ENCODE measurements at regions of chr1 and their contacts with region 1.

Region 1: DNA sequence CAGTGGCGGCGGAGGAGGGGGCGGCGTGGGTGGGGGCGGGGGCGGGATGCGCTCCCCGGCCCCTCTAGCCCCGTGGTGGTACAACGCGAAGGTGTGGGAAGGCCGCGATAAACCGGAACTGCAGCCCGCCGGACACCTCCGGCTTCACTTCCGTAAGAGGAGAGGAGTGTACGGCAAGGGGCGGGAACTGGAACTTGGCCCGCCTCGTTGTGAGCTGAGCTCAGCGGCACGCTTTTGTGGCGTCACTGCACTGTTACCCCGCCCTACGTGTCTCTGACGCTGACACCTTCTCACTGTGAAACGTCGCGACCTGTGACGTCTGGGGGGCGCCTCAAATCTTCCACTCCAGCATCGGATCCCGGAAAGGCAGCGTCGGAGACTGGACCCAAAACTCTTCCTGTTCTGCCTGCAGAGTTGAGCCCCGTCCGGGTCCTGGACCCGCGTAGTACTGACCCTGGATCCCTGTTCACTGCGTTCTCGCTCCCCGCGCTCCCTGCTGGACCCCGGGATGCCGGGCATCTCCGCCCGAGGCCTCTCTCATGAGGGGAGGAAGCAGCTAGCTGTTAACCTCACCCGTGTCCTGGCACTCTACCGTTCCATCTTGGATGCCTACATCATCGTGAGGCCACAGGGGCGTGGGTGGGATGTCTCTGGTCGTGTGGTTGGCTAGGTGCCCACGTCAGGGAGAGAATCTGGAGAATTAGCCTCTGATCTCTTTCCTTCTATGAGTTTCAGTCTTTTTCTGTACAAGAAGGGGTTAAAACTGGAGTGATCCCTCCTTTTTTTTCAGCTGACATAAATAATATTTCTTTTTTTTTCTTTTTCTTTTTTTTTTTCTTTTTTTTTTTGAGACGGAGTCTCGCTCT is at the start of gene ISG20L2:
- DNase-seq: peak; percentile 94
- CTCF ChIP-seq: no peak

Region 2: DNA sequence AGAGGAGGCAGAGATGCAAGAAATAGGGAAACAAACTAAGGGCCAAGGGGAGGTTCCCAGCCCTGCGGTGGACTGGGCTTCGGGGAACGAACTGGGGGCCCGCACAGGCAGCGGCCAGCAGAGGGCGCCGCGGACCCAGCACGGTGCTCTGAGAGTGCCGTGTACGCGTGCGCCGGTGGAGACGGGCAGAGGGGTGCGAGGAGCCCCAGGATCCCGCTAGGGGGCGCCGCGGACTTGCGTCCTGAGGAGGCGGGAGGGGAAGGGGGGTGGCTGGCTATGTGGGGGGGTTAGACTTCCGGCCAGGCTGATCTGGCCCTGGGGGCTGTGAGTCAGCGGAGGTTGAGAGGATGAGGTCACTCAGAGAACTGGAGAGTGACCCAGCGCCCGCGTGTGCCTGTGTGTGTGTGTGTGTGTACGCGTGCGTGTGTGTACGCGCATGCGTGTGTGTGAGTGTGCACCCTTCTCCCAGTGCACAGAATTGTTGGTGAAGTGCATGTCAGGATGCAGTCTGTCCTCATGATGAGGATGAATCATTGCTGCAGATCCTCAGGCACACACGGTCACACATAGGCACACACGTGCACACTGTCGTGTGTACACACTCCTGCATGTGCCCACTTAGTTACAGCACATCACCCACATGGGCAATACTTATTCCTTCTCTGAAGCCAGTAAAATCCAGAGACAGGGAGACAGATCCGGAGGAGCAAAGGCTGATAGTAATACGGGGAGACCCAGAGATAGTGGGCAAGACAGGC is 68.7 kb before region 1 on chr1:
- CTCF ChIA-PET with region 1: interaction called, 103 read pairs
- POLR2A ChIA-PET with region 1: interaction called, 4 read pairs
- DNase-seq: peak; percentile 99
- CTCF ChIP-seq: peak; percentile 99

Region 3: GRCh38 chr1:156740679-156741612 is 12.1 kb after region 1 on chr1 and contains the start of gene MRPL24:
- CTCF ChIA-PET with region 1: interaction called, 64 read pairs
- POLR2A ChIA-PET with region 1: interaction called, 11 read pairs
- DNase-seq: peak; percentile 93
- CTCF ChIP-seq: no peak

Region 4: GRCh38 chr1:156773607-156774006 is 44.8 kb after region 1 on chr1:
- CTCF ChIA-PET with region 1: interaction called, 94 read pairs
- POLR2A ChIA-PET with region 1: no interaction called
- DNase-seq: no peak
- CTCF ChIP-seq: no peak

Region 5: GRCh38 chr1:156813750-156814570 is 85.1 kb after region 1 on chr1:
- CTCF ChIA-PET with region 1: interaction called, 10 read pairs
- POLR2A ChIA-PET with region 1: no interaction called
- DNase-seq: peak; percentile 82
- CTCF ChIP-seq: peak; percentile 58

Region 6: DNA sequence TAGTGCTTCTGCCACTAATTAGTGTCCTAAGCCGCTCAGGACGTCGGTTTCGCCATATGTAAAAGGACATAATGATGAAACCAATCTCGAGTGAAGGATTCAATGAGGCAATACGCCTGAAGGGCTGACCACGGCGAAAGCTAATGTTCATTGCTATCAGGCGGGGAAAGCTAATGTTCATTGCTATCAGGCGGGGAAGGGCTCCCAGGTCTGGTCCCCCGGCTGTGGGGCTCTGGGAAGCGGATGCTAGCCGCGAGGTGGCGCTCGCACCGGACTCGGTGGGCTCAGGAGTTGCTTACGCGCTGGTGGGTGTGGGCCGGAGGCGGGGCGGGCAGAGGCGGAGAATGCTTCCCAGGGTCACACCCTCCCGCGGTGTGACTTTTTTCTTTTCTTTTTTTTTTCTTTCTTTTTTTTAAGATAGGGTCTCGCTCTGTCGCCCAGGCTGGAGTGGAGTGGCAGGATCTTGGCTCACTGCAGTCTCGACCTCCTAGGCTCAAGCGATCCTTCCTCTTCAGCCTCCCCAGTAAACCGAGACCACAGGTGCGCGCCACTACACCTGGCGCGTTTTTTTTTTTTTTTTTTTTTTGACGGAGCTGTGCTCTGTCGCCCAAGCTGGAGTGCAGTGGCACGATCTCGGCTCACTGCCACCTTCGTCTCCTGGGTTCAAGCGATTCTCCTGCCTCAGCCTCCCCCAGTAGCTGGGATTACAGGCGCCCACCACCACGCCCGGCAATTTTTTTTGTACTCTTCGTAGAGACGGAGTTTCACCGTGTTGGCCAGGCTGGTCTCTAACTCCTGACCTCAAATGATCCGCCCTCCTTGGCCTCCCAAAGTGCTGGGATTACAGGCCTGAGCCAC is 163.6 kb after region 1 on chr1:
- CTCF ChIA-PET with region 1: interaction called, 65 read pairs
- POLR2A ChIA-PET with region 1: no interaction called
- DNase-seq: peak; percentile 89
- CTCF ChIP-seq: peak; percentile 80

Region 7: DNA sequence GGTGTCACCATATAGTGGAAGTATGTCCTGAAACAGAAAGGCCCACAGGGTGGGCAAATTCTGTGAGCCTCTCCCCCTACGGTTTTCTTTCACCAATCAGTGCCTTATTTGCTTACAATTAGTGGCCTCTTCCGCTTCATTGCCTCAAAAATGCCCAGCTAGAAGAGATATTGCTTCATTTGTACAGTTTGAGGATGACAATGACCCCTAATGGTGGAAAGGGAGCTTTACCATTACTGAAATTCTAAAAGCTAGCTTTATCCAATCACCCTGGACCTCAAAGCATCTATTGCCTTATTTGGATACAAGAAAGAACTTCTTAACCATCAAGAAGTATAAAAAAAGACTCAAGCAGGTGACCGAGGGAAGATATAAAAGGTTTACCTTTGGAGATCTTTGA is 241.2 kb after region 1 on chr1:
- CTCF ChIA-PET with region 1: no interaction called
- POLR2A ChIA-PET with region 1: no interaction called
- DNase-seq: no peak
- CTCF ChIP-seq: peak; percentile 21

Measured in GM10248 (cell line).